ENCODE measurements at regions of chr10 and their contacts with region 1.

Region 1: GRCh38 chr10:102072673-102073527 is 7.8 kb downstream of the HPS6 start:
- DNase-seq: no peak
- ATAC-seq: peak; percentile 99
- H3K4me3 ChIP-seq: no peak overlapping the region
- H3K27ac ChIP-seq: no peak overlapping the region
- H3K4me1 ChIP-seq: no peaks in the 10 kb centered on the region
- H3K27me3 ChIP-seq: no peaks in the 10 kb centered on the region
- CTCF ChIP-seq: peak; percentile 94 to 96 (median 95)
- EP300 ChIP-seq: no peak
- POLR2A ChIP-seq: no peak
- RAD21 ChIP-seq: peak; percentile 92

Region 2: GRCh38 chr10:101830322-101831168 is 242.4 kb before region 1 on chr10:
- CTCF ChIA-PET with region 1: interaction called, 64 read pairs
- POLR2A ChIA-PET with region 1: no interaction called
- RAD21 ChIA-PET with region 1: interaction called, 3 read pairs
- SMC1A ChIA-PET with region 1: interaction called, 3 read pairs
- in situ Hi-C with region 1: no loop called
- intact Hi-C with region 1: no loop called
- DNase-seq: peak; percentile 81
- ATAC-seq: peak; percentile 87
- H3K4me3 ChIP-seq: peak overlapping the region; percentile 63
- H3K27ac ChIP-seq: peak overlapping the region; percentile 82
- H3K4me1 ChIP-seq: peaks cover 22% of the 10 kb centered on the region
- H3K27me3 ChIP-seq: no peaks in the 10 kb centered on the region
- CTCF ChIP-seq: no peak
- EP300 ChIP-seq: 0 out of 4 replicates have a peak, but pooled peaks have one; percentile 6 to 35
- POLR2A ChIP-seq: peak; percentile 83
- RAD21 ChIP-seq: no peak

Region 3: GRCh38 chr10:102016416-102016815 is 56.5 kb before region 1 on chr10:
- CTCF ChIA-PET with region 1: interaction called, 71 read pairs
- POLR2A ChIA-PET with region 1: no interaction called
- RAD21 ChIA-PET with region 1: no interaction called
- SMC1A ChIA-PET with region 1: interaction called, 19 read pairs
- in situ Hi-C with region 1: no loop called
- intact Hi-C with region 1: no loop called
- DNase-seq: no peak
- ATAC-seq: no peak
- H3K4me3 ChIP-seq: no peak overlapping the region
- H3K27ac ChIP-seq: no peak overlapping the region
- H3K4me1 ChIP-seq: no peaks in the 10 kb centered on the region
- H3K27me3 ChIP-seq: no peaks in the 10 kb centered on the region
- CTCF ChIP-seq: no peak
- EP300 ChIP-seq: no peak
- POLR2A ChIP-seq: no peak
- RAD21 ChIP-seq: no peak

Region 4: DNA sequence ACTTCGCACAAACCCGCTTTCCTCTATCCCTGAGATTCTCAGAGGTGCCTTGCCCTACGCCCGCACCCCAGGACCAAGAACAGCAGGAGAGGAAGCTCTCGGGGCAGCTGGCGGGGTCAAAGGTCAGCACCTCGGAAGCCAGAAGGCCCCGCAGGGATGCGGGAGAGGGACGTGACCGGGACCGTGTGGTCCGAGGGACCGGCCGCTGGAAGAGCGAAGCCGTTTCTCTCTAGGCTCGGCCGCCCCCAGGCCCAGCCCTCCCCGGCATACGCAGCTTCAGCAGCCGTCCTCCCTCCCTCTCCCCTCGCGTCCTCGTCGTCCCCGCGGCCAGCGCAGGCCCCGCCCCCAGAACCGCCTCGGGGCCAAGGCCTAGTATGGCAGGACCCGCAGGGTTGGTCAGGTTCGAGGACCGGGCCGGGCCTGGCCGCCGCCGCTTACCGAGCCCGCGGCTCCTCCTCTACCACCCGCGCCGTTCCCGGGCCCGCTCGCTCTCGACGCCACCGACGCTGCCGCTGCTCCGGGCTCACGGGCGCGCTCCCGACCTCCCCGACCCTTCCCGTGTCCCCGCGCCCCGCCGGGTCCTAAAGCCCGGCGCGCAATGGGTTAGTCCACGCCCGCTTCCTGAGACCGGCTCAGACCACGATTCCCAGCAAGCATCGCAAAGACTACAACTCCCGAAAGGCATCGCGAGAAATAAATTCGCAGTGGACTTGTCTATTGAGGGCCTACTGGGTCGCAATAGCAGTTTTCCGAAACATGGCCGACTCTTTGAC is 17.1 kb before region 1 on chr10 and contains the start of gene ARMH3:
- CTCF ChIA-PET with region 1: interaction called, 9 read pairs
- POLR2A ChIA-PET with region 1: interaction called, 4 read pairs
- RAD21 ChIA-PET with region 1: no interaction called
- SMC1A ChIA-PET with region 1: interaction called, 13 read pairs
- in situ Hi-C with region 1: no loop called
- intact Hi-C with region 1: no loop called
- DNase-seq: peak; percentile 87
- ATAC-seq: peak; percentile 98
- H3K4me3 ChIP-seq: peak within 1 kb of the TSS; percentile 93
- H3K27ac ChIP-seq: peak within 1 kb of the TSS; percentile 77
- H3K4me1 ChIP-seq: 0 out of 2 replicates have a peak, but pooled peaks cover 9% of the 10 kb centered on the region
- H3K27me3 ChIP-seq: no peaks in the 10 kb centered on the region
- CTCF ChIP-seq: no peak
- EP300 ChIP-seq: no peak
- POLR2A ChIP-seq: peak; percentile 83
- RAD21 ChIP-seq: no peak
- polyA plus RNA-seq, gene ARMH3: 13.6 to 14.0 TPM

Region 5: GRCh38 chr10:102090772-102091171 is 17.9 kb after region 1 on chr10:
- CTCF ChIA-PET with region 1: interaction called, 14 read pairs
- POLR2A ChIA-PET with region 1: no interaction called
- RAD21 ChIA-PET with region 1: no interaction called
- SMC1A ChIA-PET with region 1: interaction called, 3 read pairs
- in situ Hi-C with region 1: no loop called
- intact Hi-C with region 1: no loop called
- DNase-seq: no peak
- ATAC-seq: no peak
- H3K4me3 ChIP-seq: no peak overlapping the region
- H3K27ac ChIP-seq: no peak overlapping the region
- H3K4me1 ChIP-seq: no peaks in the 10 kb centered on the region
- H3K27me3 ChIP-seq: no peaks in the 10 kb centered on the region
- CTCF ChIP-seq: no peak
- EP300 ChIP-seq: no peak
- POLR2A ChIP-seq: no peak
- RAD21 ChIP-seq: no peak

Region 6: GRCh38 chr10:102114861-102115618 is 42.1 kb after region 1 on chr10:
- CTCF ChIA-PET with region 1: interaction called, 28 read pairs
- POLR2A ChIA-PET with region 1: interaction called, 3 read pairs
- RAD21 ChIA-PET with region 1: no interaction called
- SMC1A ChIA-PET with region 1: interaction called, 4 read pairs
- in situ Hi-C with region 1: no loop called
- intact Hi-C with region 1: no loop called
- DNase-seq: no peak
- ATAC-seq: peak; percentile 82
- H3K4me3 ChIP-seq: peak overlapping the region; percentile 82
- H3K27ac ChIP-seq: peak overlapping the region; percentile 84
- H3K4me1 ChIP-seq: peaks cover 43% of the 10 kb centered on the region
- H3K27me3 ChIP-seq: no peaks in the 10 kb centered on the region
- CTCF ChIP-seq: no peak
- EP300 ChIP-seq: no peak
- POLR2A ChIP-seq: peak; percentile 92
- RAD21 ChIP-seq: no peak